ENCODE measurements at regions of chr7 and their contacts with region 1.

Region 1: GRCh38 chr7:120272261-120272660 is 714 bp upstream of the KCND2 start:
- DNase-seq: peak; percentile 39
- H3K4me3 ChIP-seq: peak overlapping the region; percentile 64
- CTCF ChIP-seq: peak; percentile 75

Region 2: GRCh38 chr7:119959811-119960210 is 312.4 kb before region 1 on chr7:
- in situ Hi-C with region 1: loop called (anchors 10 kb)
- DNase-seq: no peak
- H3K4me3 ChIP-seq: no peak overlapping the region
- CTCF ChIP-seq: no peak

Region 3: GRCh38 chr7:120714945-120715344 is 442.7 kb after region 1 on chr7:
- in situ Hi-C with region 1: no loop called
- DNase-seq: no peak
- H3K4me3 ChIP-seq: no peak overlapping the region
- CTCF ChIP-seq: no peak